ENCODE measurements at regions of chr9 and their contacts with region 1.

Region 1: DNA sequence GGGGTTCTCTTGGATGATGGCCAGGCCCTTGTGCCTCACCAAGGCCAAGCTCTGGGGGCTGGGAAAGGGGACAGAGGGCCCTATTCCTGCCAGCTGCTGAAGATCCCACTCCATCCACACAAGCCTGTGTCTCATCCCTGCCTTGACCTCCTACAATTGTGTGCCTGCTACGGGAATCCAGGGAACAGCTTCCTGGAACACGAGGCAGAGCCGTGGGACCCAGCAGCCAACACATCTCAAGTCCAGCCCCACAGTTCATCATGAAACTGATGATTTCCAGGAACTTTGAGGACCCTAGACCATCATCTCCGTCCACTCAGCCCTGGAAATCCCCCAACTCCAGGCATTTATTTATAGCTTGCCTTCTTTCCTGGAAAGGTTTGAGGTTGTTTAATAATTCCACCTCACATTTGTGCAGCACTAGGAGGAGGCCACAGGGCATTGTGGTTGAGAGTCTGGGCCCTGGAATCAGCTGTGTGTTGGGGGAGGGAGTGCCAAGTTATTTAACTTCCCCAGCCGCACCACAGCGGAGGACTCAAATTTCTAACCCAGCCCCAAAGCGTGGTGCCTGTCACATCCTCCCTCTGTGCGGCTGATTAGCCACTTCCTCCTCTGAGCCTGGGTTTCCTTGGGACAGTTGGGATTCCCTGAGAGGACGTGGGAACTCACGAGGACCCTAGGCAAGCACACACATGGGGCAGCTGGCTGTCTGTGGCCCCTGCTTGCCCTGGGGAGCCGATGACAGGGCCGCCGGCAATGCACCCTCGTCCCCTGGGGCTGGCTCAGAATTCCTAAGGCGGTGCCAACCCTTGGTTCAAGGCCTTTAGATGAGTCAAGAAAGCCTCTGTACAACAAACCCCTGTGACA is 58.2 kb upstream of the GGTA1 start:
- DNase-seq: peak; percentile 93 to 94
- ATAC-seq: peak; percentile 78
- H3K4me3 ChIP-seq: no peak overlapping the region
- H3K27ac ChIP-seq: peak overlapping the region; percentile 45 to 91
- H3K4me1 ChIP-seq: peaks cover 0 to 6% of the 10 kb centered on the region in 2 donors
- H3K27me3 ChIP-seq: no peaks in the 10 kb centered on the region

Region 2: GRCh38 chr9:121598965-121599871 is 41.4 kb after region 1 on chr9:
- intact Hi-C with region 1: loop called in 1 of 2 experiments (anchors 5 kb)
- DNase-seq: peak; percentile 72 to 90
- ATAC-seq: peak; percentile 83
- H3K4me3 ChIP-seq: peak overlapping the region; percentile 9 to 35
- H3K27ac ChIP-seq: no peak overlapping the region
- H3K4me1 ChIP-seq: no peaks in the 10 kb centered on the region
- H3K27me3 ChIP-seq: no peaks in the 10 kb centered on the region

Measured in aorta (tissue), 5 donors.